ENCODE measurements at regions of chr10 and their contacts with region 1.

Region 1: DNA sequence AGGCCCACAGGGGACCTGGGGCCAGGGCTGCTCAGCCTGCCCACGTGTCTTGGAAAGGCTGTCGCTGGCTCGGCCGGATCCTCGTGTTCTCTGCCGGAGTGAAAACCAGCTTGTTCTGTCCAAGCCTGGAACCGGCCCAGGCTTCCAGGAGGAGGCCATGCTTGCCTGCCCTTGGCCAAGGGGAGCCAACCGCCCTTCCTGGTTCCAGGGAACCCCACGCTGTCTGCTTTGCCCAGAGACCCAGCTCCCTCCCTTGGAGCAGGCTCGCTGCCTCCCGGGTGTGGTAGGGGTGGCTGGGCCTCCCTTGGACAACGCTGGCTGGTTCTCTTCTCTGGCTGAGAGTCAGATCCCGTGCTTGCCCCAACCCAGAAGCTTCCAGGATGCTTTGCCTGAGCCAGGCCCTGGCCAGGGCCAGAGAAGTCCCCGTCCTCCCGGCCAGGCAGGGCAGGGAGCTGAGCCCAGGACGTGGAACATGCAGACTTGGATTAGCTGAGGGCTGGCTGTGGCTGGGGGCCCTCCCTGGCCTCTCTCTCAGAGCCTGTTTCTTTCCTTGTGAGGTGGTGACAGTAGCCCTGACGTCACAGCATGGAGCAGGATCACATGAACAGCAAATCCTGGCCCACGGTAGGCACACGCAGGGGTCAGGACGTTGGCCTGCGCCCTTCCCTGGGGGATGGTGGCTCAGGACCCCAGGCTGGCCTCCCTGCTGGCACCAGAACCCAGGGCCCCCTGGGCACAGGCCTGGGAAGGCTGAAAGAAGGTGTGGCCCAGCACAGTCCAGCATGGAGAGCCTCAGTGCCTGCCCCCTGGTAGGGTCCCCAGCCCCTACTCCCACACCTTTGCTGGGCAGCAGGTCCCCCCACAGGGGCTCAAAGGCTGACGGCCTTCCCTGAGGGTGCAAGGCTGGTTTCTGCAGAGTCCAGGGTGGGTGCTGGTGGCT is 67.5 kb downstream of the PWWP2B start:
- DNase-seq: peak; percentile 86 to 94 (median 89)
- H3K4me3 ChIP-seq: no peak overlapping the region
- H3K27ac ChIP-seq: peak overlapping the region; percentile 38 to 76
- H3K4me1 ChIP-seq: peaks cover 29% of the 10 kb centered on the region
- H3K27me3 ChIP-seq: no peaks in the 10 kb centered on the region
- CTCF ChIP-seq: no peak
- EP300 ChIP-seq: no peak
- POLR2A ChIP-seq: no peak

Region 2: DNA sequence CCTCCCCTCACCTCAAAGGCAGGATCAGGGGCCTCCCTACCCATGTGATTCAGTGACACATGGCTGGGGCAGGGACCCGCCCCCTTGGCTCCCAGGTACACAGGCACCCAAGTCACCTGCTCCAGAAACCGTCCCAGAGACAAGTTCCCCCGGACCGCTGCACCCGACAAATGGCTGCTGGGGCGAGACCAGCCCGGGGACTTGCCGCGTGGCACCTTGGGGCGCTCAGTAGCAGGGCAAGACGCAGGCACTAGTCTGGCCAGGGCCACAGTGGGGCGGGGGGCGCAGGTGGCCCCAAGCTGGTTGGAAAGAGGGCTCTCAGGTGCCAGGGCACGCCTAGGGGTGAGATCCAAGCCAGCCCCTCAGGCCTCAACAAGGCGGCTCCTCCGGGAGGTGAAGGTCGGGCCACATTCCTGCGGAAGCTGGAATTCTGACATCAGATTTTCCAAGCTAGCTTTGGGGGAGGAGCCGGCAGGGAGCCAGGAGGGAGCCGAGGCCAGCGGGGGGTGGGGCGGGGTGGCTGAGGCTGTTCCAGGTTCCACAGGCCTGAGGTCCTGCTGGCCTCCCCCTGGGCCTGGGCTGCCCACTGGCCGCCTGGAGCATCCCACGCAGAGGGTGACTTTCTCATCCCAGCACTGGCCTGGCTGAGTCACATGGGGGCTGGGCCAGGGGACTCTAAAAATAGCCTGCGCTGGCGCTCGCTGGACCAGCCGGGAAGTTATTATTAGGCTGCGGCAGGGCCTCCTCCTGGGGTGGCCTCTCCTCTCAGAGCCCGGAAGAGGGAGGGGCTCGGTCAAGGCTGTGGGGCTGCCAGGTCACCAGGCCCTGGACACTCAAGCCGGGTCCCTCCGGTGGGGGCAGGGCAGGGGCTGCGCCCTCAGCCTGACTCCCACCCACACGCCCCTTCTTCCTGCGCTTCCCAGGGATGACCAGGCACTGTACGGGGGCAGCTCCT is 52.5 kb after region 1 on chr10:
- intact Hi-C with region 1: loop called in 2 of 4 experiments (anchors 2 to 5 kb)
- DNase-seq: peak; percentile 95 to 98 (median 97)
- H3K4me3 ChIP-seq: peak overlapping the region; percentile 21
- H3K27ac ChIP-seq: peak overlapping the region; percentile 75 to 87
- H3K4me1 ChIP-seq: peaks cover 47% of the 10 kb centered on the region
- H3K27me3 ChIP-seq: no peaks in the 10 kb centered on the region
- CTCF ChIP-seq: no peak
- EP300 ChIP-seq: no peak
- POLR2A ChIP-seq: peak; percentile 14